ENCODE measurements at regions of chr4 and their contacts with region 1.

Region 1: GRCh38 chr4:98143001-98143899 is at the start of gene STPG2:
- DNase-seq: peak; percentile 82 to 93
- H3K4me3 ChIP-seq: peak within 1 kb of the TSS; percentile 77 to 87 (median 86)
- H3K27ac ChIP-seq: peak within 1 kb of the TSS; percentile 90
- H3K4me1 ChIP-seq: peaks cover 0 to 3% (median 0%) of the 10 kb centered on the region in 4 experiments; a peak in 3 of 7 replicates
- H3K27me3 ChIP-seq: no peaks in the 10 kb centered on the region
- CTCF ChIP-seq: peak; percentile 53 to 76 (median 69)
- EP300 ChIP-seq: no peak
- POLR2A ChIP-seq: peak in 1 of 2 experiments; percentile 92; a peak in 2 of 3 replicates
- RAD21 ChIP-seq: peak; percentile 54 to 66; a peak in 3 of 4 replicates
- total RNA-seq, gene STPG2: not detected in 2 replicates

Region 2: GRCh38 chr4:98046665-98047064 is 96.6 kb before region 1 on chr4:
- CTCF ChIA-PET with region 1: interaction called, 11 read pairs
- POLR2A ChIA-PET with region 1: no interaction called
- DNase-seq: no peak
- H3K4me3 ChIP-seq: no peak overlapping the region
- H3K27ac ChIP-seq: no peak overlapping the region
- H3K4me1 ChIP-seq: peaks cover 0 to 3% (median 0%) of the 10 kb centered on the region in 4 experiments; a peak in 1 of 7 replicates
- H3K27me3 ChIP-seq: no peaks in the 10 kb centered on the region
- CTCF ChIP-seq: peak in 2 of 3 experiments; percentile 28 to 35; a peak in 3 of 4 replicates
- EP300 ChIP-seq: no peak
- POLR2A ChIP-seq: no peak
- RAD21 ChIP-seq: peak; percentile 32 to 41

Region 3: DNA sequence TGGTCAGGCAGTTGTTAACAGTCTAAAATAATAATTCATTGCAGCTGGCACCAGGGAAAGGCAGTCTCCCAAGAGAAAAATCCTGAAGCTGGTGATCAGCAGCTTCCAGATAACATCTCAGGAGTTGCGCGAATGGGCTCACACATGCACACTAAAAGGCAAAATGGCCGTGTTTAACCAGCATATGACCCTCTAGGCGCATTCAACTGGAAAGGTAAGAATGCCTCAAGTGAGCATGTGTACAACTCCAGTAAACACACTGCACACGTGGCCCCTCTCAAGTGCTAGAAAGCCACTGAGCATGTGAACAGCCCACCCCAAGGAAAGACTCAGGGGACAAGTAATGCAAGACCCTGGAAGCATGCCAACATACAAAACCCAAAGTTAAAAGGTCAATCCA is 33.0 kb before region 1 on chr4:
- CTCF ChIA-PET with region 1: interaction called, 4 read pairs
- POLR2A ChIA-PET with region 1: interaction called, 12 read pairs
- DNase-seq: no peak
- H3K4me3 ChIP-seq: peak overlapping the region in 1 of 4 experiments; percentile 10; a peak in 1 of 8 replicates
- H3K27ac ChIP-seq: peak overlapping the region; percentile 47; the same call in 1 of the 2 replicates
- H3K4me1 ChIP-seq: peaks cover 0 to 3% (median 1%) of the 10 kb centered on the region in 4 experiments; a peak in 2 of 7 replicates
- H3K27me3 ChIP-seq: no peaks in the 10 kb centered on the region
- CTCF ChIP-seq: no peak
- EP300 ChIP-seq: no peak
- POLR2A ChIP-seq: no peak
- RAD21 ChIP-seq: no peak

Region 4: GRCh38 chr4:98117363-98117762 is 25.9 kb before region 1 on chr4:
- CTCF ChIA-PET with region 1: interaction called, 14 read pairs
- POLR2A ChIA-PET with region 1: interaction called, 4 read pairs
- DNase-seq: no peak
- H3K4me3 ChIP-seq: no peak overlapping the region
- H3K27ac ChIP-seq: no peak overlapping the region
- H3K4me1 ChIP-seq: peaks cover 0 to 3% (median 0%) of the 10 kb centered on the region in 4 experiments; a peak in 1 of 7 replicates
- H3K27me3 ChIP-seq: no peaks in the 10 kb centered on the region
- CTCF ChIP-seq: no peak
- EP300 ChIP-seq: no peak
- POLR2A ChIP-seq: no peak
- RAD21 ChIP-seq: no peak

Measured in H1 (cell line).